ENCODE measurements at regions of chr6 and their contacts with region 1.

Region 1: GRCh38 chr6:44096612-44097011 is 30.6 kb downstream of the MRPL14 start:
- DNase-seq: peak; percentile 81
- H3K4me3 ChIP-seq: no peak overlapping the region
- H3K27ac ChIP-seq: no peak overlapping the region
- H3K4me1 ChIP-seq: peaks cover 0 to 16% (median 10%) of the 10 kb centered on the region in 4 donors
- H3K27me3 ChIP-seq: no peaks in the 10 kb centered on the region
- CTCF ChIP-seq: peak; percentile 75 to 87 (median 84)
- EP300 ChIP-seq: no peak
- POLR2A ChIP-seq: no peak

Region 2: DNA sequence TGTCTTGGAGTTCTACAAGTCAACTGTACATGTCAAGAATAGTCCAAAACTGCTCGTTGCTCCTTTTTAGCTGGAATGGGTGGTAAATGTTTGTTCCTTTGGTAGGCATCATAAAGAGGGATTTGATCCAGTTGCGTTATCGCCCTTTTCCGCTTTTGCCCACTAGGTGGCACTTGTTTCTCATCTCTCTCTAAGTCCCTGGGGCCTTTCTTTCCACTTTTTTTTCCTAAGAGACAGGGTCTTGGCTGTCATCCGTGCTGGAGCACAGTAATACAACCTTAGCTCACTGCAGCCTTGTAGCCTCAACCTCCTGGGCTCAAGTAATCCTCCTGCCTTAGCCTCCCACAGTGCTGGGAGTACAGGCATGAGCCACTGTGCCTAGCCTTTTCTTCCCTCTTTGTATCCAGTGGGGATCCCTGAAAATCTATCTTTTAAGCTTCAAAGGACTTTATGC is 488.3 kb before region 1 on chr6:
- in situ Hi-C with region 1: loop called in 1 of 4 experiments (anchors 25 kb)
- intact Hi-C with region 1: no loop called
- DNase-seq: peak; percentile 75
- H3K4me3 ChIP-seq: no peak overlapping the region
- H3K27ac ChIP-seq: no peak overlapping the region
- H3K4me1 ChIP-seq: peaks cover 0 to 3% (median 0%) of the 10 kb centered on the region in 4 donors
- H3K27me3 ChIP-seq: no peaks in the 10 kb centered on the region
- CTCF ChIP-seq: peak; percentile 70 to 83 (median 78)
- EP300 ChIP-seq: no peak
- POLR2A ChIP-seq: no peak

Region 3: DNA sequence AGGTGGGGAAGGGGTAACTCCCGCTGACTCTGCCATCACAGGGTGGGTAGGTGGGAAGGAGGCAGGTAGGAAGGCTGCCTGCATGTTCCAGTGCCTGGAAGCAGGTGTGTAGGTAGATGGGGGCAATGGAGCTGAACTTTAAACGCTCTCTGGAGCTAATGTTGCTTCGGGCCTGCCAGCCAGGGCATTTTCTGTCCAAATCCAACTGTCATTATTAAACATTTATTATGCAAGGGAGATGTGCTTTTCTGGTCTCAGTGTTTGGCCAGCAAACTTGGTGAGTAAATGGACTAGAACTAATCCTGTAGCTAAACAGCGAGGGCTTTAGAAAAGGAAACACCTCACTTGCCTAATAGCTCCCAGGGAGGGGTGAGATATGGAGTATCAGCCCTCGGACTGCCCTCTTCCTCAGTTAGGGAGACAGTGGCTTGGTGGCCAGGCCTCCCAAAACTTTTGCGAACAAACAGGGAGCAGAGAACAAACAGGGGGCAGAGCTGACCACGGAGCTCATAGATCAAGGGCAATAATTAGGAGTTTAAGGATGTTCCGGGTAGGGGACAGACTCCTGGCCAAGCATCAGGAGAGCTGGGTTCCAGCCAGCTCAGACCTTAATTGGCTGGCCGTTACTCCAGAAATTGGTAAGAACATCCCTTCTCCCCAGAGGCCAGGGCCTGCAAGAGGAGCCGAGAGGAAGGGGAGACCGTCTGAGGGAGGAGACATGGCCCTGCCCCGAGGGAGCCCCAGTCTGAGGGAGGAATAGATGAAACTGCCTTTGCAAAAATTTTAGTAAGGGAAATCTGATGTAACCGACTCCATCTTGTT is 195.5 kb before region 1 on chr6:
- in situ Hi-C with region 1: no loop called
- intact Hi-C with region 1: no loop called
- DNase-seq: no peak
- H3K4me3 ChIP-seq: no peak overlapping the region
- H3K27ac ChIP-seq: peak overlapping the region in 1 of 4 donors; percentile 11
- H3K4me1 ChIP-seq: no peaks in the 10 kb centered on the region
- H3K27me3 ChIP-seq: no peaks in the 10 kb centered on the region
- CTCF ChIP-seq: no peak
- EP300 ChIP-seq: no peak
- POLR2A ChIP-seq: no peak

Region 4: GRCh38 chr6:44002593-44003344 is 93.8 kb before region 1 on chr6:
- in situ Hi-C with region 1: no loop called
- intact Hi-C with region 1: no loop called
- DNase-seq: peak; percentile 70
- H3K4me3 ChIP-seq: peak overlapping the region in 3 of 4 donors; percentile 9 to 43 (median 32)
- H3K27ac ChIP-seq: peak overlapping the region in 1 of 4 donors; percentile 9
- H3K4me1 ChIP-seq: peaks cover 3 to 25% (median 13%) of the 10 kb centered on the region in 4 donors
- H3K27me3 ChIP-seq: peaks cover 29% of the 10 kb centered on the region
- CTCF ChIP-seq: no peak
- EP300 ChIP-seq: no peak
- POLR2A ChIP-seq: no peak

Measured in transverse colon (tissue), 4 donors.